Caco-2 (cell line): ENCODE measurements at regions of chr11 and their contacts with region 1.

Region 1: GRCh38 chr11:73760679-73761402 is at the start of gene RAB6A:
- DNase-seq: peak; percentile 100
- H3K4me3 ChIP-seq: peak within 1 kb of the TSS; percentile 92
- H3K4me3 Mint-ChIP-seq: peak within 1 kb of the TSS; percentile 91
- H3K27ac Mint-ChIP-seq: peak within 1 kb of the TSS; percentile 82
- H3K4me1 ChIP-seq: peaks cover 28% of the 10 kb centered on the region
- H3K4me1 Mint-ChIP-seq: peaks cover 21% of the 10 kb centered on the region
- H3K27me3 ChIP-seq: no peaks in the 10 kb centered on the region
- H3K27me3 Mint-ChIP-seq: no peaks in the 10 kb centered on the region
- CTCF ChIP-seq: peak; percentile 51 to 63
- total RNA-seq, gene RAB6A: 210 and 227 TPM in 2 replicates

Region 2: DNA sequence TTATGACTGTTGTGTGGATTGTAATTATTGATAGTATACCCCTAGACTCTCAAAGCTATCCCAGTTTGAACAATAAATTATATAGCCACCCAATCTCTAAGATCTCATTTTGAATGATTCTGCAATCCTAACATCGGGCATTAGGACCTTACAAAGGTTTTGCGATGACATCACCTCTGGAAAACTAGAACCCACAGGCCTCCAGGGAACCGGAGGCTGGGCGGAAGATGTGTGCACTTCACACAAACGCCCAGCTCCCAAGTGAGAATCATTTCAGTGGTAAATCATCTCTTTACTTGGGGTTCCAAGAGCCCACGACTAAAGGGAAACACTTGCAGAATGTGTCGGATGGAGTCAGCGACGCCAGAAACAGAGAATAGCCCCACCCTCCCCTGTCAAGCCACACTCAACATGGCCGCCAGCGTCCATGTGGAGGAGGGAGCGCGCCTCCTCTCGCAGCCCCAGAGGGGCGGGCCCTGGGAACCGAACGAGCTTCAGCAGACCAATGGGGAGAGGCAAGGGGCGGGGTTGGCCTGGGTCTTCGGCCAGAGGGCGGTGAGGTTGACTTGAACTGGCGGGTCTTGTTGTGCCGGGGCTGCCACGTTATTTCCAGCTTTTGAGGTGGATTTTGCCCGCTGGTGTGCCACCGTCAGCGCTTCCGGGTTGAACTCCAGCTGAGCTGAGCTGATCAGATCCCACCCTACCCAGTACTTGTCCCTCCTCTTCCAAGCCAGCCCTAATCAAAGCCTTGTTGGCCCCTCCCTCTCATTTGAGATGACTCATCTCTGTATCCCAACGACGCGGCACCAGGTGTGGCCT is 18.5 kb after region 1 on chr11:
- CTCF ChIA-PET with region 1: interaction called, 39 read pairs
- POLR2A ChIA-PET with region 1: interaction called, 92 read pairs
- intact Hi-C with region 1: loop called (anchors 1 kb)
- DNase-seq: peak; percentile 100
- H3K4me3 ChIP-seq: peak overlapping the region; percentile 72
- H3K4me3 Mint-ChIP-seq: peak overlapping the region; percentile 99
- H3K27ac Mint-ChIP-seq: peak overlapping the region; percentile 99
- H3K4me1 ChIP-seq: peaks cover 21% of the 10 kb centered on the region
- H3K4me1 Mint-ChIP-seq: peaks cover 16% of the 10 kb centered on the region
- H3K27me3 ChIP-seq: no peaks in the 10 kb centered on the region
- H3K27me3 Mint-ChIP-seq: no peaks in the 10 kb centered on the region
- CTCF ChIP-seq: no peak

Region 3: DNA sequence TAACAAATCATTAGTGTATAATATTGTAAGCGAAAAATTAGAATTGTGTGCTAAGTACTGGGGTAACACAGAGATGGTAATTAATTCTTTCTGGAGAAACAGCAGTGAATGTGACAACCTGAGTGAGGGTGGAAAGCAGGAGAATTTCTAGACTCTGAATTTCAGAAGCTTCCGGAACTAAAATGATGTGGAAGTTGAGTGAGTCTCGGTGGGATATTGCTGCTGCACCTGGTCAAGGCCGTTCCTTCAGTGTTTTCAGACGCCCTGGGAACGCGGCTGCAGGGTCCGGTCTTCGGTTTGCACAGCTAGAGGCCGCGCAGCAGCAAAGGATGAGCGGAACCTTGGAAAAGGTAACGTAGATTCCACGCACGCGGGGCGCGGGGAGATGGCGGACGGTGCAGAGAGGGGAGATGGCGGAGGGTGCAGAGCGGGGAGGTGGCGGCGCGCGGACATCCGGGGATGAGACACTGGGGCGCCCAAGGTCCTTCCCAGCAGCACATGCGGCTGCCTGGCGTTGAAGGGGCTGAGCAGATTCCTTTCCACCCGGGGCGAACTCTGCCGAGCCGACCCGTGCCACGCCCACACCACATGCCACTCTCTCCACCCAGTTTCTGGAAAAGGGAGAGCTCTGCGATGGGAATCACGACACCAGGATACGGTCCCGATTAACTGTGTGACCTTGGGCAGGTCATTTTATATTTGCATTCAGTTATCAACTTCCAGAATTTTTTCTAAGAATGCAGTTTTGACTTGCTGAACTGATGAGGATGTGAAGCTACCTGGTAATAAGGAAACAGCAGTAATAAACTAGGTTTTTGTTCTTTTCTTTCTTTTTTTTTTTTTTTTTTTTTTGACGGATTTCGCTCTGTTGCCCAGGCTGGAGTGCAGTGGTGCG is 27.0 kb after region 1 on chr11 and contains the start of gene MRPL48:
- CTCF ChIA-PET with region 1: interaction called, 6 read pairs
- POLR2A ChIA-PET with region 1: interaction called, 38 read pairs
- intact Hi-C with region 1: loop called (anchors 1 kb)
- DNase-seq: peak; percentile 99
- H3K4me3 ChIP-seq: peak within 1 kb of the TSS; percentile 66
- H3K4me3 Mint-ChIP-seq: peak within 1 kb of the TSS; percentile 86
- H3K27ac Mint-ChIP-seq: peak within 1 kb of the TSS; percentile 95
- H3K4me1 ChIP-seq: peaks cover 27% of the 10 kb centered on the region
- H3K4me1 Mint-ChIP-seq: peaks cover 30% of the 10 kb centered on the region
- H3K27me3 ChIP-seq: no peaks in the 10 kb centered on the region
- H3K27me3 Mint-ChIP-seq: no peaks in the 10 kb centered on the region
- CTCF ChIP-seq: no peak
- total RNA-seq, gene MRPL48: 111 and 113 TPM in 2 replicates